Aorta (tissue), 5 donors: ENCODE measurements at regions of chr10 and their contacts with region 1.

Region 1: DNA sequence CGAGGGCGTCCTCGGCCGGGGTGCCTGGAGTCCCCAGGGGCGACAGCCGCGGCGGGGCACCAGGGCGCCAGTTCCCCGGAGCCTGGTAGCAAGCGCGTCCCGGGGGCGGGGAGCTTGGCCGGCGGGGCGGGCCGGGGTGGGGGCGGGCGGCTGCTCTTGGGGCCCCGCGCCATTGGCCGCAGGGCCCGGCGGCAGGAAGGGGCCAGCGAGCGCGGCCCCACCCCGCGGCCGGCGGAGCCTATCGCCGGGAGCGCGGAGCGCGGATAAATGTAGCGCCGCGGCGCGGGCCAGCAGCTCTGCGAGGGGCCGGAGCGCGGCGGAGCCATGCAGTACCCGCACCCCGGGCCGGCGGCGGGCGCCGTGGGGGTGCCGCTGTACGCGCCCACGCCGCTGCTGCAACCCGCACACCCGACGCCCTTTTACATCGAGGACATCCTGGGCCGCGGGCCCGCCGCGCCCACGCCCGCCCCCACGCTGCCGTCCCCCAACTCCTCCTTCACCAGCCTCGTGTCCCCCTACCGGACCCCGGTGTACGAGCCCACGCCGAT is at the start of gene HHEX:
- DNase-seq: peak; percentile 84 to 87
- ATAC-seq: peak; percentile 81
- H3K4me3 ChIP-seq: peak within 1 kb of the TSS; percentile 50 to 74
- H3K27ac ChIP-seq: peak within 1 kb of the TSS in 1 of 2 donors; percentile 11
- H3K4me1 ChIP-seq: no peaks in the 10 kb centered on the region
- H3K27me3 ChIP-seq: no peaks in the 10 kb centered on the region
- total RNA-seq, gene HHEX: 11.5 to 22.7 TPM

Region 2: DNA sequence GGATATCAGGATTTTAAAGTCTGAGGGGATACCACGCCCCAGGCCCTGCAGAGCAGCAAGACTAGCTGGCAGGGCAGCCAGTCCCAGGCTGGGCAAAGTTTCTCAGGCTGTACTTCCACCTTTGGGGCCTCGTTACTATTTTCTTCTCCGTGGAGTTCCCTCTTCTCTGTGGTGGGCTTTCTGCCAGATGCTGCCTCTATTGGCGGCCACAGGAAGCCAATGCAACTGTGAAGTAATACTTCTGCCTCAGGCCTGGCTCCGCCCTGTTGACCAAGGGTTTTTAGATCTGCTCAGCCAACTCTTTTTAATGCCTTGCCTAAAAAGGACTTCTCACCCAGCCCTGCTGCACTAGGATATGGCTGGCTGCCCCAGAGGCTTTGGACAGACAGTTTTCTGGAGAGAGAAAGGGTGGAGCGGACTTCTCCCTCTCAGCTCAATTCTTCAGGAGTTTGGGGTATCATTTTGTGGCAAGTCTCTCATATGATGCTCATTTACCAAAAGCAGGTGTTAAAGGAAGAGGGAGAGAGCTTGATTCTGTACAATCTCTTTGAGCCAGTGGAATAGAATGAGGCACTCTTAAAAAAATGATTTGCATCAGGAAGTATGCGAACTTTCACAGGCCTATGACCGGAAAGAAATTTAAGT is 67.5 kb after region 1 on chr10:
- intact Hi-C with region 1: loop called in 1 of 2 experiments (anchors 5 kb)
- DNase-seq: peak; percentile 93 to 96
- ATAC-seq: peak; percentile 94
- H3K4me3 ChIP-seq: no peak overlapping the region
- H3K27ac ChIP-seq: peak overlapping the region; percentile 32 to 97
- H3K4me1 ChIP-seq: peaks cover 0 to 3% of the 10 kb centered on the region in 2 donors
- H3K27me3 ChIP-seq: no peaks in the 10 kb centered on the region

Region 3: GRCh38 chr10:92848441-92849233 is 158.9 kb after region 1 on chr10 and contains the start of gene EXOC6:
- intact Hi-C with region 1: loop called in 1 of 2 experiments (anchors 10 kb)
- DNase-seq: peak; percentile 89 to 94
- ATAC-seq: peak; percentile 90
- H3K4me3 ChIP-seq: peak within 1 kb of the TSS; percentile 75 to 88
- H3K27ac ChIP-seq: peak within 1 kb of the TSS in 1 of 2 donors; percentile 60
- H3K4me1 ChIP-seq: no peaks in the 10 kb centered on the region
- H3K27me3 ChIP-seq: no peaks in the 10 kb centered on the region
- total RNA-seq, gene EXOC6: 16.2 to 17.6 TPM